Heart right ventricle (tissue), 16 donors: ENCODE measurements at regions of chr2 and their contacts with region 1.

Region 1: DNA sequence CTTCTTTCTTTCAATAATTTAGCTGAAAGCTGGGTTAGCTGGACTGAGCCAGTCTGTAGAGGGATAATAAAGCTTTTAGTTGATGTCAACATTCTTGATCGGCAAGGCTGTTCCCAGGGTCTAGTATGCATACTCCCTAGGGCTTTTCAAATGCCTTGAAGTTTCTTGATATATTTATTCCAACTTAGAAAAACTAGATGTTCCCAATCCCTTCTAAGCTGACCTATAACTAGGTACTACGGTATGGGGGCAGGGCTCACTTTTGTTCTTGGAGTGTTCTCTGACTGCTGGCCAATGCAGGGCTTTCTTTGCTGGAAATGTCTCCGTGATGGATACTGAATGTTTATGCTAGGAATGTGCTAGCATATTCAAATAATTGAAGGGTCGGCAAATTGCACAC is 258.6 kb upstream of the TANK start:
- DNase-seq: no peak
- ATAC-seq: peak in 6 of 8 donors; percentile 42 to 83 (median 64)
- H3K4me3 ChIP-seq: peak overlapping the region in 1 of 10 donors; percentile 1
- H3K27ac ChIP-seq: no peak overlapping the region
- H3K4me1 ChIP-seq: peaks cover 0 to 34% (median 0%) of the 10 kb centered on the region in 9 donors
- H3K27me3 ChIP-seq: no peaks in the 10 kb centered on the region
- CTCF ChIP-seq: no peak

Region 2: GRCh38 chr2:160687629-160688028 is 214.0 kb before region 1 on chr2:
- intact Hi-C with region 1: loop called in 1 of 10 experiments (anchors 2 kb)
- DNase-seq: no peak
- ATAC-seq: no peak
- H3K4me3 ChIP-seq: no peak overlapping the region
- H3K27ac ChIP-seq: no peak overlapping the region
- H3K4me1 ChIP-seq: no peaks in the 10 kb centered on the region
- H3K27me3 ChIP-seq: no peaks in the 10 kb centered on the region
- CTCF ChIP-seq: no peak